Stomach (tissue), 19 donors: ENCODE measurements at regions of chr2 and their contacts with region 1.

Region 1: DNA sequence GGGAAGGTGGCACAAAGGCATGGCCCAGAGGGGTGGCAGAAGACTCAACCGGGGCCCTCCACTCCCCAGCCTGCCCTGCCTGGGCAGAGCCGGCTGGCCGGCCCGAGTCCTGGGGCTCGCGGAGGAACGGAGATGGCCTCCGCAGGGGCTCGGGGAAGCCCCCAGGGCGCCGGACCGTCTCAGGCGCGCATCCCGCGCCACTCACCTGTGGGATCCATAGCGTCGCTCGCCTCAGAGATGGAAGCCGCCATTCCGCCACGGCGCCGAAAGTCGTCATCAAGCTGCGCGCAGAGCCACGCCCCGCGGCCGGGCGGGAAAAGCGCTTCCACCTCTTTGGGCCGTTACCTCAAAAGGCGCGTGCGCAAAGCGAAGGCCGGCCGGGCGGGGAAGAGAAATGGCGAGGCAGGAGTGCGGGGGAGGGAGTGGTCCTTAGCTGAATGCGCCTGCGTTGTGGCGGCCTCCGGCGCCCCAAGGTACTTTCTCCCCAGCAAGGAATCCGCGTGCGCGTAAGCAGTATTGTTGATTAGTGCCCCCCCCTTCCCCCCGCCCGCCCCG is at the start of gene SMPD4:
- DNase-seq: peak; percentile 98 to 99
- H3K4me3 ChIP-seq: peak within 1 kb of the TSS; percentile 93 to 99 (median 94)
- H3K27ac ChIP-seq: peak within 1 kb of the TSS; percentile 89 to 96 (median 90)
- H3K4me1 ChIP-seq: peaks cover 21 to 42% (median 37%) of the 10 kb centered on the region in 4 donors
- H3K27me3 ChIP-seq: no peaks in the 10 kb centered on the region
- CTCF ChIP-seq: peak in 1 of 7 experiments; percentile 4
- EP300 ChIP-seq: no peak
- POLR2A ChIP-seq: no peak
- total RNA-seq, gene SMPD4: 11.4 to 109 (median 36.8) TPM

Region 2: GRCh38 chr2:130332271-130333073 is 151.1 kb after region 1 on chr2:
- intact Hi-C with region 1: loop called (anchors 10 kb)
- DNase-seq: peak; percentile 69 to 91
- H3K4me3 ChIP-seq: peak overlapping the region in 3 of 4 donors; percentile 0 to 31 (median 18)
- H3K27ac ChIP-seq: no peak overlapping the region
- H3K4me1 ChIP-seq: peaks cover 0 to 20% (median 19%) of the 10 kb centered on the region in 4 donors
- H3K27me3 ChIP-seq: peaks cover 0 to 40% (median 0%) of the 10 kb centered on the region in 3 donors
- CTCF ChIP-seq: peak in 5 of 7 experiments; percentile 78 to 90 (median 85)
- EP300 ChIP-seq: no peak
- POLR2A ChIP-seq: no peak

Region 3: GRCh38 chr2:131488306-131489205 is 1307.2 kb after region 1 on chr2:
- intact Hi-C with region 1: loop called (anchors 10 kb)
- DNase-seq: no peak
- H3K4me3 ChIP-seq: no peak overlapping the region
- H3K27ac ChIP-seq: no peak overlapping the region
- H3K4me1 ChIP-seq: peaks cover 7 to 28% (median 19%) of the 10 kb centered on the region in 4 donors
- H3K27me3 ChIP-seq: no peaks in the 10 kb centered on the region
- CTCF ChIP-seq: no peak
- EP300 ChIP-seq: no peak
- POLR2A ChIP-seq: no peak